Heart right ventricle (tissue), 16 donors: ENCODE measurements at regions of chr5 and their contacts with region 1.

Region 1: DNA sequence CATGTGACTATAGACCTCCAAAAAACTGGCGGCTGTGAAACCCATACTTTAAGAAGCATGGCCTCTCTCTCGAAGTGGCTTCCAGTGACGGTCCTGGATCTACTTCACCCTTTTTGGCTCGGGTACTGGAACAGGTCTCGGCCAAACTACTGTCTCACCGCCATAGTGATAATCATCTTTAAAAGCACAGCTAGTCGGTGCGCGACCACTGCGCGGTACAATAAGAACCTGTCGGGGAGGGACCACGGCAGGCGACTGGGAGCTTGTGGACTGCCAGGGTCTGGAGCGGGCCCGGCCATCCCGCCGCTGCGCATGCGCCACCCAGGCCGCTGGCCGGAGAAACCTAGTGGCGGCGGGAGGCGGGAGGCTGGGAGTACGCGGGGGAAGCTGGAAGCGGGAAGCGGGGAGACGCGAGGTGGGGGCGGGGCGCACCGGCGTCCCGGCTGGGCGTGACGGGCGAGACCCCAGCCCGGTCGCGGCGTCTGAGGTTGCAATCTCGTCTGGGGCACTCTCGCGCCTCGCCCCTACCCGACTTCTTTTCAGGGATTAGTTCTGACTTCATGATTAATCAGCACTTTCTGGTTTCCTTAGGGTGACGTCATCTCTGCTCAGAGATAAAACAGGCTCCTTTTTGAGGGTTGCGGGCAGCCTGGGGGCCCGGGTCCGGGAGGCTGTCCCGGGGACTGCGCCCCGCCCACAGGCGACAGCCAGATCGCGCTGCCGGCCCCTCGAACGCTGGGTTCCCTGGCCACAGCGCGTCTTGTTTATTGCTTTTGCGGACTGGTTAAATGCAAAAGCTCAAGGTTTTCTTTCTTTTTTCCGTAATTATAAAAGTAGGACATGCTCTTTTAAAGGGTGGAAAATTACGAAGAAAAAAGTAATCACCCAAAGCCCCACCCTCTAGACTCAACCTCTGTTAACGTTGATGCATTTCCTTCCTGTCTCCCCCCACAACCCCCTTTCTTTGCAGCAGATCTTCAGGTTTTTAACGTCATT is 266.8 kb downstream of the CWC27 start:
- DNase-seq: peak; percentile 90 to 91
- ATAC-seq: peak; percentile 94 to 97 (median 95)
- H3K4me3 ChIP-seq: peak overlapping the region; percentile 41 to 82 (median 70)
- H3K27ac ChIP-seq: peak overlapping the region; percentile 79 to 99 (median 96)
- H3K4me1 ChIP-seq: peaks cover 18 to 55% (median 39%) of the 10 kb centered on the region in 9 donors
- H3K27me3 ChIP-seq: no peaks in the 10 kb centered on the region
- CTCF ChIP-seq: peak in 2 of 9 donors; percentile 8 to 16

Region 2: GRCh38 chr5:64818245-64818644 is 217.3 kb before region 1 on chr5:
- intact Hi-C with region 1: loop called in 2 of 10 experiments (anchors 5 kb)
- DNase-seq: no peak
- ATAC-seq: no peak
- H3K4me3 ChIP-seq: no peak overlapping the region
- H3K27ac ChIP-seq: peak overlapping the region in 2 of 10 donors; percentile 3 to 45
- H3K4me1 ChIP-seq: peaks cover 0 to 48% (median 20%) of the 10 kb centered on the region in 9 donors
- H3K27me3 ChIP-seq: no peaks in the 10 kb centered on the region
- CTCF ChIP-seq: no peak